Activated CD4-positive, alpha-beta T cell treated with anti-CD3 and anti-CD28 coated beads for 36 hours (primary cell): ENCODE measurements at regions of chr6 and their contacts with region 1.

Region 1: GRCh38 chr6:138161338-138162110 is at the start of gene ARFGEF3:
- DNase-seq: peak; percentile 85
- ATAC-seq: peak; percentile 97
- H3K4me3 Mint-ChIP-seq: peak within 1 kb of the TSS; percentile 66
- H3K27ac Mint-ChIP-seq: no peak within 1 kb of the TSS
- H3K4me1 Mint-ChIP-seq: peaks cover 13% of the 10 kb centered on the region
- H3K27me3 Mint-ChIP-seq: peaks cover 60% of the 10 kb centered on the region
- total RNA-seq, gene ARFGEF3: 1.6 to 1.7 TPM

Region 2: DNA sequence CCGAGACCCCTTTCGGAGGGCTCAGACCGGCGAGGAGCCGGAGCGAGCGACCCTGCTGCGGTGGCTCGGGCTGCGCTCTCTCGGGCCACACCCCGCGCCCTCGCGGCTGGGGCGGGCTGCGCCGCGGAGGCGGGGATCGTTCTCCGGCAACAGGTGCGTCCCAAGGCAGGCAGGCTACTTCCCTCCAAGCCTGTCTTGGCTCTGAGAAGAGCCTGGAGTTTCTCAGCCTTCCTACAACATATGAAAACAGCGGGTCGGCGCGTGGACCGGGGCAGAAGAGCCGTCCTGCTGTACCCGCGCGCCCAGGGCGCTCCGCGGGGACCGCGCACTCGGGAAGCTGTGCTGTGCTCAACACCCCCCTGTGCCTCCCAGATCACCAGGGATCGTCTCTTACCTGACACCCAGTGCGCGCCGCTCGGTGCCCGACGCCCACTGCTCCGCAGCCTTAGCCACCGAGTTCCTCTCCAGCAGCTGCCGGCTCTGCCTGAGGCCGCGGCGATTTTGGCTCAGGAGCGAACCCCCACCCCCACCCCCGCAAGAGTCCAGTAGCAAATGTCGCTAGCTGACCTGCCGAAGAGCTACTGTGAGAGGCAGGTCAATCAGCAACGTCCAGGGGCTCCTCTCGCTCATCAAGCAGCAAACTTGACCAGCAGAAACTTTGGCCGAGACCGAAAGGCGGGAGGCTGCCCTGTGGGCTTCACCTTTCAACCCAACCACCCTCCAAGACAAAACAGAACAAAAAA is 663.6 kb before region 1 on chr6:
- CTCF ChIA-PET with region 1: no interaction called
- POLR2A ChIA-PET with region 1: no interaction called
- intact Hi-C with region 1: loop called in 1 of 2 experiments (anchors 5 kb)
- DNase-seq: peak; percentile 33
- ATAC-seq: peak; percentile 11
- H3K4me3 Mint-ChIP-seq: peak overlapping the region; percentile 38
- H3K27ac Mint-ChIP-seq: no peak overlapping the region
- H3K4me1 Mint-ChIP-seq: peaks cover 42% of the 10 kb centered on the region
- H3K27me3 Mint-ChIP-seq: peaks cover 69% of the 10 kb centered on the region

Region 3: GRCh38 chr6:138063726-138064125 is 97.8 kb before region 1 on chr6:
- CTCF ChIA-PET with region 1: no interaction called
- POLR2A ChIA-PET with region 1: no interaction called
- intact Hi-C with region 1: no loop called
- DNase-seq: no peak
- ATAC-seq: no peak
- H3K4me3 Mint-ChIP-seq: no peak overlapping the region
- H3K27ac Mint-ChIP-seq: no peak overlapping the region
- H3K4me1 Mint-ChIP-seq: no peaks in the 10 kb centered on the region
- H3K27me3 Mint-ChIP-seq: peaks cover 10% of the 10 kb centered on the region

Region 4: DNA sequence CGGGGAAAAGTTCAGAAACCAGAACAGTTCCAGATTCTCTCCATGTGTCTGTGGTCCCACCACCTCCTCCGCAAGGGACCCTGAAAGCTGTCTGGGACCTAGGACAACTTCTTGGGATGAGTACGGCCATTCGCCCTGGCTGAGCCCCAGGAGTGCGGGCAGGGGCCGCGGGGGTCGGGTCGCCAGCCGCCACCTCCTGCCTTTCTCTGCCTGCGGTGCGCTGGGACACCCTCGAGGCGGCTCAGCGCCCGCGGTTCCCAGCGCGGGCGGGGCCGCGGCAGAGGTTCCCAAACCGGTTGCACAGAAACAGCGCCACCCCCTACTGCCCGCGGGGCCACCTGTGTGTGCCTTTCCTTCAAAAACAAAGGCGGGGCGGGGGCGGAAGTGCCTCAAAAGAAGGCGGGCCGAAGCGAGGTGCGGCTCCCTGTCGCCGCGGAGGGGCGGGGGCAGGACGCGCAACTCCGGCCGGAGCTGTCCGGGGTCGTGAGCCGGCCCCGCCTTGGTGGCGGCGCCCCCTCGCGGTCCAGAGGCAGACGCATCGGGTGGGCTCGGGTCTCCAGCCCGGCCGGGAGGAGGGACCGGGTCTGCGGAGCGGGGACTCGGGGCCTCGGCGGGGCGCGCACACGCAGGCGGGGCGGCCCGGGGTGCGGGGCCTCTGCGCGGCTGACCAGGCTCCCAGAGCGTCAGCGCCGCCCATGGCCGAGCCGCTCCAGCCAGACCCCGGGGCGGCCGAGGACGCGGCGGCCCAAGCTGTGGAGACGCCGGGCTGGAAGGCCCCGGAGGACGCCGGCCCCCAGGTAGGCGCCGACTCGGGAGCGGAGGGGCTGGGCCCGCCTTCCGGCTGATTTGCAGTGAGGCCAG is 242.5 kb after region 1 on chr6 and contains the start of gene HEBP2:
- CTCF ChIA-PET with region 1: no interaction called
- POLR2A ChIA-PET with region 1: no interaction called
- intact Hi-C with region 1: loop called in 1 of 2 experiments (anchors 2 kb)
- DNase-seq: peak; percentile 91
- ATAC-seq: peak; percentile 88
- H3K4me3 Mint-ChIP-seq: peak within 1 kb of the TSS; percentile 70
- H3K27ac Mint-ChIP-seq: peak within 1 kb of the TSS; percentile 37
- H3K4me1 Mint-ChIP-seq: peaks cover 6% of the 10 kb centered on the region
- H3K27me3 Mint-ChIP-seq: no peaks in the 10 kb centered on the region
- total RNA-seq, gene HEBP2: 4.0 to 4.7 TPM

Region 5: DNA sequence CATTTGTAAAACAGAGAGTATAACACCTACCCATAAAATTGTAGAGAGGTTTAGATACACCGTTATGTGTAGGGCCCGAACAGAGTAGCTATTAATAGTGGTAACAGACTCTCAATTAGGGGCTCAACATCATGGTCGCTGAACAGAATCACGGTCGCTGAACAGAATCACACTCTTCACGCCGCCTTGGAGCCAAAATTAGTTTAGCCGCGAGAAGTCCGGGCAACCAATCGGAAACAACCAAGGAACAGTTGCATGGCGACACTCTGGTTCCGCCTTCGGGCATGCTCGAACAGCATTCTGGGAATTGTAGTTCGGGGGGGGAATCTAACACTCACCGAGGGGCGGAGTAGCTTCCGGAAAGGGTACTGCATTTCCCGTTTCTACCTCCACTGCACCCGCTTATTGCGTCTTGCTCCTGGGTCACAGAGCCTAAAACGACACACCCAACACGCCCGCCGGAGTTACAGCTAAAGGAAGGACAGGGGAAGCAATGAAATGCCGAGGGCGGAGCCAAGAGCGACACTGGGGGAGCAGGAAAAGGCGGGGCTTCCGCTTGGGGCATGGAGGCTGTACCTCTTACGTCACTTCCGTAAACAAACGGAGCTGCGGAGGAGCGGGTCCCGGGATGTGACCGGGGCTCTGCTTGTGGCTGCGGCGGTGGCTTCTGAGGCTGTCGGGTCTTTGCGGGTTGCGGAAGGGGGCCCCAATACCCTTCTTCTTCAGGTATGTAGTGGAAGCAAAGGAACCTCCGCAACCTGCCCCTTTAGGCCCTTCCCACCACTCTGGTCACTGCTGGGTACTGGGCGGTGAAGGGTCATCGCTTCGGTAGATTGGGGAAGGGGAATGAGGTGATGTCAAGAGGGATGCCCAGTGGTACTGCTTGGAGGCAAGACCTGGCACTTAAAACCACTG is 611.9 kb after region 1 on chr6 and contains the start of gene CCDC28A:
- CTCF ChIA-PET with region 1: no interaction called
- POLR2A ChIA-PET with region 1: no interaction called
- intact Hi-C with region 1: loop called in 1 of 2 experiments (anchors 5 kb)
- DNase-seq: peak; percentile 95
- ATAC-seq: peak; percentile 91
- H3K4me3 Mint-ChIP-seq: peak within 1 kb of the TSS; percentile 84
- H3K27ac Mint-ChIP-seq: peak within 1 kb of the TSS; percentile 98
- H3K4me1 Mint-ChIP-seq: peaks cover 31% of the 10 kb centered on the region
- H3K27me3 Mint-ChIP-seq: no peaks in the 10 kb centered on the region
- total RNA-seq, gene CCDC28A: 14.8 to 16.8 TPM